Activated naive CD4-positive, alpha-beta T cell treated with anti-CD3 and anti-CD28 coated beads for 36 hours (primary cell): ENCODE measurements at regions of chrX and their contacts with region 1.

Region 1: GRCh38 chrX:72620550-72621145 is 48.0 kb upstream of the HDAC8 start:
- DNase-seq: peak; percentile 64
- H3K4me3 Mint-ChIP-seq: no peak overlapping the region
- H3K27ac Mint-ChIP-seq: peak overlapping the region; percentile 90
- H3K4me1 Mint-ChIP-seq: peaks cover 21% of the 10 kb centered on the region
- H3K27me3 Mint-ChIP-seq: peaks cover 12% of the 10 kb centered on the region

Region 2: DNA sequence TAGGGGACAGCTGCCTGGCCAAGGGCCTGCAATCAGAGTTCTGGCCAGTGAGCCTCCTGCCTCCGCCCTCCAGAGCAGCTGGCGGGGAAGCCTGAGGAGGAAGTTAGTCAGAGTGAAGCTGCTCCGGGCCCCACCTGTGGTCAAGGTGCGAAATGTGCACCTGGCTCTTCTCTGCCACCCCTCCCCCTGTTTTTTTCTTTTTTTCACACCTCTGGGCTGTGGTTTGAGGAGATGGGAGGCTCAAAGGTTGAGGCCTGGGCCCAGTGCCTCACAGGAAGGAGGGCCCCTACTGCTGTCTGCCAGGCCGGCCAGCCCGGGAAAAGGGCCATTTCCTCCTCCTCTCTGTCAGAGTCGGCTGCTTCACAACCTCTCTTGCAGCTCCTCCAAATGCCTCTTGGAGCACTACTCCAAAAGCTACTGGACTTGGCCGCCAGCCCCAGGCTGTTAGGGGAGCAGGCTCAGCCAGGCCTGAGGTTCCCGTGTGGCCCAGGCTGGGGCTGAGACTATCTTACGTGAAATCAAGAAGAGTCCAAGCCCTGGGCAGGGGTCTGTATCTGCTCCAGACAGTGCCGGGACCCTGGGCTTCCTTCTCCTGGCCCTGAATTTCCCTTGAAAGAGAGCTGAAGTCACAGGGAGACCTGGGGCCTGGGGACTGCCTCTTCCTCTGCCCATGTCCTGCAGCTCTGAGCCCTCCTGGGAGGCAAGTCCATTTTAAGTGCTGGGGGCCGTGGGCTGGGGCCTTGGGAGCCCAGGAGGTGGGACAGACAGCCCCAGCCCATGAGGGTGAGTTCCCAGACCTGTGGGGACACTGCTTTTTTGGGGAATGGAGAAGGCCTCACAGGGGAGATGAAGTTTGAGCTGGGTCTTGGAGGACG is 997.8 kb before region 1 on chrX:
- CTCF ChIA-PET with region 1: no interaction called
- intact Hi-C with region 1: loop called (anchors 10 kb)
- DNase-seq: peak; percentile 88
- H3K4me3 Mint-ChIP-seq: peak overlapping the region; percentile 26
- H3K27ac Mint-ChIP-seq: peak overlapping the region; percentile 86
- H3K4me1 Mint-ChIP-seq: peaks cover 59% of the 10 kb centered on the region
- H3K27me3 Mint-ChIP-seq: no peaks in the 10 kb centered on the region

Region 3: DNA sequence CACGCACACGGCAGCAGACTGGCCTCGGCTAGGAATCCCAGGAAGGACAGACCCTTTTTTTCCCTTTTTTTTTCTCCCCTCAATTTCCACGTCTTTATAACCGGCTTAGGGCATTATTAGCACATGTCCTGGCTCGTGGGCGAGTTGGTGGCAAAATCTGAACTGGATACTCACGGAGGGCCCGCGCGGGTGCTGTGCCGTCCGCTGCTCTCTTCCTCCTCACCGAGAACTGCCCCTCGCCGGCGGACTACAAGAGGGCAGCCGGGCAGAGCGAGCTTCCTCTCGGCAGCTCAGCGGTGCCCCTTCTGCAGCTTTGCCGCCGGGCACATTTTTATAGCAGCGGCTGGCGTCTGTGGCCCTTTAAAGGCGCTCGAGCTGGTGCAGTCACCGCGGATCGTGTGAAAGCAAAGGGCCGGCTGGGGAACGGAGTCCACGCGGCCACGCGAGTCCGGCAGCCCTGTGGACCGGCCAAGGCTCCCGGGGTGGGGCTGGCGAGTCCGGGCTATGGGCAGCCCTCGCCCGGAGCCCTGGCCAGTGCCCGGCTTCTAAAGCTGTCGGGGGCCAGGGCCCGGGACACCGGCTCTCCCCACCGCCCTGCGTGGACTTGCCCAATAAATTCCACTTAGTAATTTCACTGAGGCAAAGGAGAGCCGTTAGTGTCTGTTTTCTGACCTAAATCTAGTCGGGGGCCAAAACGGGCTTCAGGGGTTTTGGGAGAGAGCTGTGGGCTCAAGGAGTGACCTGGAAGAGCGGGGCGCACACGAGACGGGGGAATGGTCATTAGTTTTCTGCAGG is 313.6 kb before region 1 on chrX:
- CTCF ChIA-PET with region 1: no interaction called
- intact Hi-C with region 1: loop called (anchors 5 kb)
- DNase-seq: peak; percentile 8
- H3K4me3 Mint-ChIP-seq: peak overlapping the region; percentile 68
- H3K27ac Mint-ChIP-seq: no peak overlapping the region
- H3K4me1 Mint-ChIP-seq: peaks cover 20% of the 10 kb centered on the region
- H3K27me3 Mint-ChIP-seq: peaks cover 50% of the 10 kb centered on the region

Region 4: DNA sequence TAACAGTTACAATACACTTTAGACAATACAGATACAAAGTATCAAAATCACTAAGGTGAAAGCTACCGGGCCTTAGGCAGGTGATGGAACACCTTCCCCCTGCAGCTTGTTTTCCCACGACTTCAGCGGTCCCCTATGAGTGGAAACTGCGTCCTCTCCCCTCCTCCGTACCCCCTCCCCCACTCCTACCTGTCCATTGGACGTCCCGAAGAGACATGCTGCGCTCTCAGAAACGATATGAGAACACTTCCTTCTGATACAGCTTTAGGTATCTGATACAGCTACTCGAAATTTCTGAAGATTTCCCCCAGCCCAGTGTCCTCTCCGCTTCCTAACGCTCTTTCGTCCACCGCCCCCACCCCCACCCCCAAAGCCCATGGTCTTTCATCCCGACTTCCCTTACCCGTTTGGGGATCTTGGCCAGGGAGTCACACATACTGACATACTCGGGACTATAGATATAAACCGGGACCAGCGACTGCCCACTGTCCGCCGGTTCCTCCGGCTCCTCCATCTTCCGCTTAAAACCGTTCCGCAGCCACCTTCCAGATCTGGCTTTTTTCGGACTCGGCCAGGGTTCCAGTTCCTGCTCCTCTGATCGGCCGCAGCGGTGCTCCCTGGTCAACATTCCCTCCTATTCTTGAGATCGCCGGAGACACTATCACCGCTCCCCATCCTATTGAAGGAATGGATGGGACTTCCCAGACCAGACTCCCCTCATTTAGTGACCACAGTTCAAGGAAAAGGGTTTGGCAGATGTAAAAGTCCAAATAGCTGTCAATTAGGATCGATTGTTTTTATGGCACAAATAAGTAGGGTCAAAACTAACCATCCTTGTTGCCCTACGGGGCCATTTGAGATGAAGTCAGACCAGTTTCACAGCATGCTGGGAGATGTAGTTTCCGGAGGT is 48.1 kb before region 1 on chrX and contains the start of gene HDAC8:
- CTCF ChIA-PET with region 1: no interaction called
- intact Hi-C with region 1: loop called (anchors 1 kb)
- DNase-seq: peak; percentile 66
- H3K4me3 Mint-ChIP-seq: peak within 1 kb of the TSS; percentile 97
- H3K27ac Mint-ChIP-seq: peak within 1 kb of the TSS; percentile 91
- H3K4me1 Mint-ChIP-seq: peaks cover 7% of the 10 kb centered on the region
- H3K27me3 Mint-ChIP-seq: no peaks in the 10 kb centered on the region
- total RNA-seq, gene HDAC8: 14.8 to 16.8 TPM

Region 5: GRCh38 chrX:72714476-72714916 is 93.8 kb after region 1 on chrX:
- CTCF ChIA-PET with region 1: no interaction called
- intact Hi-C with region 1: loop called (anchors 1 kb)
- DNase-seq: peak; percentile 4
- H3K4me3 Mint-ChIP-seq: peak overlapping the region; percentile 67
- H3K27ac Mint-ChIP-seq: peak overlapping the region; percentile 41
- H3K4me1 Mint-ChIP-seq: peaks cover 6% of the 10 kb centered on the region
- H3K27me3 Mint-ChIP-seq: peaks cover 4% of the 10 kb centered on the region

Region 6: GRCh38 chrX:74218895-74219294 is 1598.2 kb after region 1 on chrX:
- CTCF ChIA-PET with region 1: no interaction called
- intact Hi-C with region 1: loop called (anchors 5 kb)
- DNase-seq: no peak
- H3K4me3 Mint-ChIP-seq: no peak overlapping the region
- H3K27ac Mint-ChIP-seq: no peak overlapping the region
- H3K4me1 Mint-ChIP-seq: peaks cover 18% of the 10 kb centered on the region
- H3K27me3 Mint-ChIP-seq: no peaks in the 10 kb centered on the region